Naive thymus-derived CD4-positive, alpha-beta T cell (primary cell): ENCODE measurements at regions of chr22 and their contacts with region 1.

Region 1: DNA sequence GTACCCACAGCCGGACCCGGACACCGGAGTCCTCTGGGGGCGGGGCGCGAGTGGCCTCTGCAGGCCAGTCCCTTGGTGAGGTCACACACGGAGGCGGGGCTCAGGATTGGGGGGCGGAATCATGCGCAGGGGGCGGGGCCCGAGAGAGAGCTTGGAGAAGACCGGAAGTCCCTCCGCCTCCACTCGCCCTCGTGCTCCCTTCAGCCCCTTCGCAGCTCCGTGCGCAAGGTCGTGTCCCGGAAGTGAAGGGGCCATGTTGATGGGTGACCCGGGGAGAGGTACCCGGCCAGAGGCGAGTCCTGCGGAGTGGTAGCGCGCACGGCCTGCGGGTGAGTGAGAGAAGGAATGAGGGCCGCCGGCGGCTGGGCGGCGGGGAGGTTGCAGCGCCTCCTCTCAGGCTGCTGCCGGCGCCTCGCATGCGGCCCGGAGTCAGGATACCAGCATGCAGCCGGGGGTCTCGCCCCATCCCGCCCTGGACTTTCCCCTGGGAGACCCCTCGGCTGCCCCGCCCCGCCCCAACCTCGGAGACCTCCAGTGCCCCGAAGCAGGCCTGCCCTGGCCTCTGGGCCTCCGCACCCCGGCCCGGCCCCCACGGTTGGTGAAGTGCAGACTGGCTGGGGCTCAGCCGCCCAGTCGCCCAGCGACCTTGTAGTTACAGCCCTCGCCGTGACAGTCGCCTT is at the start of gene MIEF1:
- DNase-seq: peak; percentile 71 to 95 (median 78)
- ATAC-seq: peak; percentile 99
- H3K4me3 ChIP-seq: peak within 1 kb of the TSS; percentile 59
- H3K4me3 Mint-ChIP-seq: peak within 1 kb of the TSS; percentile 75 to 100 (median 94)
- H3K27ac ChIP-seq: peak within 1 kb of the TSS; percentile 79
- H3K27ac Mint-ChIP-seq: peak within 1 kb of the TSS; percentile 86 to 97 (median 96)
- H3K4me1 ChIP-seq: peaks cover 16 to 21% of the 10 kb centered on the region in 2 donors
- H3K4me1 Mint-ChIP-seq: peaks cover 23 to 57% (median 47%) of the 10 kb centered on the region in 7 donors
- H3K27me3 ChIP-seq: no peaks in the 10 kb centered on the region
- H3K27me3 Mint-ChIP-seq: peaks cover 0 to 7% (median 0%) of the 10 kb centered on the region in 5 donors
- total RNA-seq, gene MIEF1: 17.5 to 42.3 (median 37.3) TPM

Region 2: GRCh38 chr22:39395936-39396796 is 106.1 kb before region 1 on chr22:
- CTCF ChIA-PET with region 1: interaction called, 9 read pairs
- POLR2A ChIA-PET with region 1: interaction called, 7 read pairs
- intact Hi-C with region 1: loop called in 1 of 2 experiments (anchors 1 kb)
- DNase-seq: no peak
- ATAC-seq: no peak
- H3K4me3 ChIP-seq: no peak overlapping the region
- H3K4me3 Mint-ChIP-seq: peak overlapping the region in 1 of 10 donors; percentile 34
- H3K27ac ChIP-seq: no peak overlapping the region
- H3K27ac Mint-ChIP-seq: peak overlapping the region in 2 of 9 donors; percentile 5 to 6
- H3K4me1 ChIP-seq: peaks cover 6 to 9% of the 10 kb centered on the region in 2 donors
- H3K4me1 Mint-ChIP-seq: peaks cover 5 to 19% (median 11%) of the 10 kb centered on the region in 7 donors
- H3K27me3 ChIP-seq: no peaks in the 10 kb centered on the region
- H3K27me3 Mint-ChIP-seq: peaks cover 0 to 2% (median 0%) of the 10 kb centered on the region in 5 donors

Region 3: GRCh38 chr22:39514373-39514973 is 12.2 kb after region 1 on chr22:
- CTCF ChIA-PET with region 1: interaction called, 8 read pairs
- POLR2A ChIA-PET with region 1: interaction called, 93 read pairs
- intact Hi-C with region 1: no loop called
- DNase-seq: peak in 6 of 9 donors; percentile 18 to 55 (median 52)
- ATAC-seq: peak; percentile 72
- H3K4me3 ChIP-seq: no peak overlapping the region
- H3K4me3 Mint-ChIP-seq: no peak overlapping the region
- H3K27ac ChIP-seq: no peak overlapping the region
- H3K27ac Mint-ChIP-seq: peak overlapping the region in 5 of 9 donors; percentile 12 to 59 (median 23)
- H3K4me1 ChIP-seq: peaks cover 0 to 9% of the 10 kb centered on the region in 2 donors
- H3K4me1 Mint-ChIP-seq: peaks cover 11 to 43% (median 22%) of the 10 kb centered on the region in 7 donors
- H3K27me3 ChIP-seq: no peaks in the 10 kb centered on the region
- H3K27me3 Mint-ChIP-seq: no peaks in the 10 kb centered on the region